HEK293 (cell line): ENCODE measurements at regions of chr6 and their contacts with region 1.

Region 1: GRCh38 chr6:100176311-100176950 is 182.4 kb upstream of the MCHR2 start:
- H3K4me3 ChIP-seq: no peak overlapping the region
- H3K27ac ChIP-seq: peak overlapping the region; percentile 56
- H3K4me1 ChIP-seq: 0 out of 2 replicates have a peak, but pooled peaks cover 3% of the 10 kb centered on the region
- CTCF ChIP-seq: 0 out of 2 replicates have a peak, but pooled peaks have one; percentile 22

Region 2: GRCh38 chr6:100186552-100186951 is 10.1 kb after region 1 on chr6:
- CTCF ChIA-PET with region 1: interaction called, 12 read pairs
- POLR2A ChIA-PET with region 1: no interaction called
- H3K4me3 ChIP-seq: no peak overlapping the region
- H3K27ac ChIP-seq: no peak overlapping the region
- H3K4me1 ChIP-seq: no peaks in the 10 kb centered on the region
- CTCF ChIP-seq: no peak

Region 3: DNA sequence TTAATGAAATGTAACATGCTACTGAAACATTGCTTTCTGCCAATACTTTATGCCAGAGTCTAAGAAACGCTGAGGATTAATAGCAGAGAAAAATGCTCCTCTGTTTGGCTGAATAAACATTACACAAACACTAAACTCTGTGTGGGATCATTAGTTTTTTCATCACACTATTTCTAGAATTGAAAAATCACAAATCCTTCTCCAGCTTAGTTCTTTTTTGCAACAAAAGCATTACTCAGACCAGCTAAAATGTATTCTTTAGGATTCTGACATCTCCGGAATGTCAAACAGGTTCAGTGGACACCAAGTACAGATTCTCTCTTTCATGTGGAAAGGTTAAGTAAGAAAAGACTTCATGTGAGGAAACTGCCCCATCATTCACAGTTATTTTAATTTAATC is 61.4 kb after region 1 on chr6:
- CTCF ChIA-PET with region 1: no interaction called
- POLR2A ChIA-PET with region 1: no interaction called
- H3K4me3 ChIP-seq: no peak overlapping the region
- H3K27ac ChIP-seq: no peak overlapping the region
- H3K4me1 ChIP-seq: 0 out of 2 replicates have a peak, but pooled peaks cover 4% of the 10 kb centered on the region
- CTCF ChIP-seq: no peak

Region 4: GRCh38 chr6:100913400-100914286 is 737.2 kb after region 1 on chr6:
- CTCF ChIA-PET with region 1: no interaction called
- POLR2A ChIA-PET with region 1: no interaction called
- H3K4me3 ChIP-seq: no peak overlapping the region
- H3K27ac ChIP-seq: no peak overlapping the region
- H3K4me1 ChIP-seq: no peaks in the 10 kb centered on the region
- CTCF ChIP-seq: no peak